Tibial artery (tissue), 4 donors: ENCODE measurements at regions of chr9 and their contacts with region 1.

Region 1: DNA sequence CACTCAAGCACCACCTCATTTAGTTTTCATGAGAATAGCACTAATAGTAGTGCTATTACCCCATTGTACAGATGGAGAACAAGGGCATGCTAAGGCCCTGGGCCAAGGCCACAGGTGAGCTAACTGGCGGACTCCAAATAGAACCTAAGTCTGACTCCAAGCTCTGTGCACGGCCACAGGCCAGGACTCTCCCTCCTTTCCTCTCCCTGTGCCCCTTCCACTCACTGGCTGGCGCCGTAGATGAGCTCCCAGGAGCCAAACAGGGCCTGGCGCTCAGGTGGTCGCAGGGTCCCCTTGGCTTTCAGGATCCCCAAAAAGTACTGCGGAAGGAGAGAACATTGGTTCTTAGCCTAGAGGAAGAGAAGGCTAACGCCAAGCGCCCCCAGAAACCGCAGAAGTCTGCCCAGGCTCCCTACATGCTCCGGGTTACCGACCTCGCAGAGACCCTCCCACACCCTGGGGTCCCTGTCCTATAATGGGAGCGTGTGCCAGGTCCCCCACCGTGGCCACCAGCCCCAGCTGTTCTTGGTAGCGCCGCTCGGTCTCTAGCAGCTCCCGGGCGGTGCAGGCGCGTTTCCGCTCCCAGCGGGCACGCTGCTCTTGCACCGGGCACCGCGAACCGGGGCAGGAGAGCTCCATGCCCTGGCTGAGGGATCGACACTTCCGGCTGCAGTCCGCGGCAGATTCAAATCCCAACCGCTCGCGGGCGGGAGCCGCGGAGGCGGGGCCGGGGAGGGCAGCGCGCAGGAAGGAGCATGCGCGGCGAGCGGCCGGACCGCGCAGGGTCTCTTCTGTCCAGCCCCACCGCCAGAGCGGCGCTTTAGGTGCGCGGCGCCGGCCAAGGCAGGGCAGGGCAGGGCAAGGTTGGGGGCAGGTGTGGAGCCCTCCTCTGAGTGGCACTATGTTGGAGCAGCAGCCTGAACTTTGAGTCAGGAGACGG is at the start of gene ARHGEF39:
- DNase-seq: peak; percentile 66 to 93
- H3K4me3 ChIP-seq: peak within 1 kb of the TSS; percentile 48 to 58
- H3K27ac ChIP-seq: peak within 1 kb of the TSS; percentile 99 to 100
- H3K4me1 ChIP-seq: peaks cover 0 to 59% (median 31%) of the 10 kb centered on the region in 4 donors
- H3K27me3 ChIP-seq: no peaks in the 10 kb centered on the region
- CTCF ChIP-seq: no peak

Region 2: DNA sequence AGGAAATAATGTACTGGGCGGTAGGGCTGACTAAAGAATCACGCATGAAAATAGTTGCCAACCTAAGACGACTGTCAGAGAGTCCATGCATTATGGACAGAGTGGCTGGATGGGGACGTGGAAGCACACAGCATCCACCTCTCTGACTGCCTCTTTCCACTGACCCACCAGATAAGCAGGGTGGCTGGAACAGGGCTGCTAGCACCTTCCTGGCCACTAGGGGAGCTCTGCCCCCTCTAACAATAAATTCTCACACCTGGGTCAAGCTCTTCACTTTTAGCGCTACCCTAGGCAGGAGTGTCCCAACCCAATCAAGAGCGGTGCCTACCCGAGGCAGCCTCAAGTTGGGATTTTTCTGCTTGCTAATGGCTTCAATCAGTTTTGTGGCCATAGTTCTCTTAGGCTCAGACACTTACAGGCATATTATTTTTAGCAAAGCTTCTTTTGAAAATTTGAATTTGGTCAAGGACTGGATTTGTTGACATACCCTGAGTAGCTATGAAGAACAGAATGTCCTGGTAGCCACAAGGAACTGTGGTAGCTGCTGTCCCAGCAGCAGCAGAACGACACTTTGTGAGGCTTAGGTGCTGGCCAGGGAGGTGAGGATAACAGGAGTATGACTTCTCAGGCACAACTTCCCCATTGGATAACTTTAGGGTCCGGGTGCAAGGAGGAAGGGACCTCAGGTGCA is 31.9 kb after region 1 on chr9:
- intact Hi-C with region 1: loop called (anchors 5 kb)
- DNase-seq: peak; percentile 60 to 80
- H3K4me3 ChIP-seq: peak overlapping the region in 1 of 2 donors; percentile 7
- H3K27ac ChIP-seq: peak overlapping the region; percentile 96 to 97
- H3K4me1 ChIP-seq: peaks cover 0 to 74% (median 43%) of the 10 kb centered on the region in 4 donors
- H3K27me3 ChIP-seq: no peaks in the 10 kb centered on the region
- CTCF ChIP-seq: peak; percentile 85 to 87

Region 3: GRCh38 chr9:35732122-35732799 is 67.5 kb after region 1 on chr9 and contains the starts of genes CREB3 and TLN1:
- intact Hi-C with region 1: no loop called
- DNase-seq: peak; percentile 99 to 100
- H3K4me3 ChIP-seq: peak within 1 kb of the TSS; percentile 65 to 93
- H3K27ac ChIP-seq: peak within 1 kb of the TSS; percentile 92 to 99
- H3K4me1 ChIP-seq: peaks cover 0 to 68% (median 50%) of the 10 kb centered on the region in 4 donors
- H3K27me3 ChIP-seq: no peaks in the 10 kb centered on the region
- CTCF ChIP-seq: no peak

Region 4: DNA sequence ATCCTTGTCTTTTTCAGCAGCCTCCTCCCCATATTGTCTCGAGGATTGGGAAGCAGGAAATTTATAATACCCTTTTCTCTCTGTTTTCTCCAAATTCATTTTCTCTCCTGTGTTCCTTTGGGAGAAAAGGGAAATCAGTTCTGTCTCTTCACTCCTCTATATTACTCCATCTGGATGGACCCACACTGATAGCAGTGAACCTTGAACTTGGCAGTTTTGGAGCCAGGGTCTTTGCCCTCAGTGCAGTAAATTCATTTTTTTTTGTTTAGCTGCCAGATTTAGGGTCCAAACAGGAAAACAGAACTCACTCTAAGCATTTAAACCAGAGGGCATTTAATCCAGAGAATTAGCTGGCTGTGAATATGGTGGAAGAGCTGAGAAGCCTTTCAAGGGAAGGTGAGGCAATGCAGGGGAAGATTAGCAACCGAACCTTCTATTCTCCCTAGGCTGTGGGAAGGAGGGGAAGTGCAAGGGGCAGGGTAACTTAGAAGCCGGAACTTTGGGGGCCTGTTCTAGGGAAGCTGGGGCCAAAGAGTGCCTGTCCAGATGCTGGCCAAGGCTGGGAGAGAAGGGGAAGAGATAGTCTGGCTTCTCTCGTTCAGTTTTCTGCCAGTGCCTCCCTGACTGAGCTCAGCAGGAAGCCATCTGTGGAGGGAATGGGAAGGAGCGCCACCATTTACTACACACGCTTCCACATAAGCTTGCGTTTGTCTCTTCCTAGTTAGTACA is 110.3 kb after region 1 on chr9:
- intact Hi-C with region 1: no loop called
- DNase-seq: peak in 1 of 2 donors; percentile 34
- H3K4me3 ChIP-seq: no peak overlapping the region
- H3K27ac ChIP-seq: no peak overlapping the region
- H3K4me1 ChIP-seq: peaks cover 0 to 20% (median 18%) of the 10 kb centered on the region in 4 donors
- H3K27me3 ChIP-seq: no peaks in the 10 kb centered on the region
- CTCF ChIP-seq: no peak